Activated CD4-positive, alpha-beta memory T cell treated with anti-CD3 and anti-CD28 coated beads, Interleukin-2, amount 10 ng/mL, durations not matched to agents 7 days and 5 days (primary cell): ENCODE measurements at regions of chr9 and their contacts with region 1.

Region 1: DNA sequence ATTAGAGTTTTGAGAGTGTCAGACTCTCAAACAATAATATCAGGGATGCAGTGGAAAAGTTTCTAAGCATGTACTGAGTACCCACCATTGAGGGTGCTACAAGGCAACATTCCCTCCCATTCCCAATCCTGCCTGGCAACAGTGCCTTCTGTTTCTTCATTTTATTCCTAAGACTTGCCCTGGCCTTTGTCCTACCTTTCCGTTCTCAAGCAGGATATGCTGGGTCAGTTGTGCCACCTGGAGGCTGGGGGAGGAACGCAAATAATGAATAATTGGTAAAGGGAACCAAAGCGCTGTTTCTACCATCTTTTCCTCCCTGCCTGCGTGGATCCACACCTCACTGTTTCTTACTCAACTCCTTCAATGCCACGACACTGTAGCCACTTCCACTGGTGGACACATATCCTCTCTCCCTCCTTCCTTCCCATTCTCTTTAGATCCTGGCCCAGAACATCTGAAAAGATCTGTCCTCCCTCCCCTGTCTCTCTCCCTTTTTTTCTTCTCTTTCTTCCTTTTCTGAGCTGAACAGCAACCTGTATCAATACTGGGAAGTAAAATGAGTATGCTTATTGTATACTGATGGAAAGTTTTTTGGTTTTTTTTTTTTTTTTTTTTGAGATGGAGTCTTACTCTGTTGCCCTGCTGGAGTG is 149.5 kb downstream of the C9orf152 start:
- DNase-seq: peak; percentile 65
- H3K4me3 Mint-ChIP-seq: no peak overlapping the region
- H3K27ac Mint-ChIP-seq: no peak overlapping the region
- H3K4me1 Mint-ChIP-seq: peaks cover 36% of the 10 kb centered on the region
- H3K27me3 Mint-ChIP-seq: no peaks in the 10 kb centered on the region

Region 2: GRCh38 chr9:110143950-110144545 is 85.6 kb after region 1 on chr9:
- CTCF ChIA-PET with region 1: interaction called, 14 read pairs
- POLR2A ChIA-PET with region 1: interaction called, 3 read pairs
- DNase-seq: peak; percentile 56
- H3K4me3 Mint-ChIP-seq: peak overlapping the region; percentile 57
- H3K27ac Mint-ChIP-seq: peak overlapping the region; percentile 95
- H3K4me1 Mint-ChIP-seq: peaks cover 60% of the 10 kb centered on the region
- H3K27me3 Mint-ChIP-seq: no peaks in the 10 kb centered on the region